Pancreas (tissue), 10 donors: ENCODE measurements at regions of chr3 and their contacts with region 1.

Region 1: GRCh38 chr3:126267226-126267975 is 87.0 kb upstream of the ALDH1L1 start:
- DNase-seq: peak; percentile 55 to 85 (median 76)
- ATAC-seq: peak; percentile 32 to 57 (median 46)
- H3K4me3 ChIP-seq: peak overlapping the region in 3 of 4 donors; percentile 19 to 38 (median 23)
- H3K27ac ChIP-seq: peak overlapping the region; percentile 55 to 96 (median 76)
- H3K4me1 ChIP-seq: peaks cover 42 to 56% (median 46%) of the 10 kb centered on the region in 3 donors
- H3K27me3 ChIP-seq: no peaks in the 10 kb centered on the region
- CTCF ChIP-seq: no peak

Region 2: GRCh38 chr3:126357295-126358037 is 90.1 kb after region 1 on chr3 and contains the start of gene KLF15:
- intact Hi-C with region 1: loop called in 2 of 3 experiments (anchors 2 to 5 kb)
- DNase-seq: peak; percentile 84 to 96 (median 92)
- ATAC-seq: peak; percentile 68 to 84 (median 75)
- H3K4me3 ChIP-seq: peak within 1 kb of the TSS; percentile 63 to 95 (median 88)
- H3K27ac ChIP-seq: peak within 1 kb of the TSS; percentile 96 to 99 (median 98)
- H3K4me1 ChIP-seq: peaks cover 0 to 16% (median 15%) of the 10 kb centered on the region in 3 donors
- H3K27me3 ChIP-seq: no peaks in the 10 kb centered on the region
- CTCF ChIP-seq: no peak
- total RNA-seq, gene KLF15: 15.2 to 38.3 (median 30.6) TPM

Region 3: GRCh38 chr3:126498929-126499328 is 231.5 kb after region 1 on chr3:
- intact Hi-C with region 1: no loop called
- DNase-seq: peak in 1 of 6 donors; percentile 45
- ATAC-seq: no peak
- H3K4me3 ChIP-seq: no peak overlapping the region
- H3K27ac ChIP-seq: no peak overlapping the region
- H3K4me1 ChIP-seq: no peaks in the 10 kb centered on the region
- H3K27me3 ChIP-seq: no peaks in the 10 kb centered on the region
- CTCF ChIP-seq: no peak